ENCODE measurements at regions of chr17 and their contacts with region 1.

Region 1: DNA sequence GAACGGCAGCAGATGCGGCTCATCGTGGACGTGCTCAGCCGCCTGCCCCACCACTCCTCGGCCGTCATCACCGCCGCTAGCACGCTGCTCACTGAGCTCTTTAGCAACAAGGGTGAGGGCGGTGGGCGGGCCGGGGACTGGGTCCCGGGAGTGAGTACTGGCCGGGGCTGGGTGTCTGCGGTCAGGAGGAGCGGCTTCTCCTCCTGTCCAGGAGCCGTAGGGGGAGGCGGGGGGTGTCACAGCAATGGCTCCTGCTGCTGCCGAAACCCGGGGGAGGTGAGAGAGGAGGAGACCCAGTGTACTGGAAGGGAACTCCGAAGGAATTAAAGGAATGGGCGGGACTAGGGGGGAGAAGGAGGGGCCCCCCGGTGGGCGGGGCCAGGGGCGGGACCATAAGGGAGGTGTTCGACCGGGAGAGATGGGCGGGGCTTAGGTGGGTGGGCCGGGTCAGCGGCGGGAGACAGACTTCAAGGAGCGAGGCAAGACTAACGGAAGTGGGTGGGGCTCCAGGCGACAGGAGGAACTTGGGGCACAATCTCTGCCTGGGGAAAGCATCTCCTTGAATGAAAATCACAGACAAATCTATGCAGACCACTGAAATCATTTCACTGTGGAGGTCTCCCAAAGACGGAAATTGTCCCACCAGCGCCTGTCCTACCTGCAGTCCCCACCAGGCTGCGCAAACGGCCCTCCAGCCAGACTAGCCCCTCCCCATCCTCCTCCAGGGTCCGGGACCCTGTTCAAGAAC is 2.4 kb downstream of the NAGS start:
- DNase-seq: peak; percentile 96
- H3K4me3 Mint-ChIP-seq: peak overlapping the region; percentile 83
- H3K27ac Mint-ChIP-seq: peak overlapping the region; percentile 78
- H3K4me1 Mint-ChIP-seq: peaks cover 25% of the 10 kb centered on the region
- H3K27me3 Mint-ChIP-seq: peaks cover 16% of the 10 kb centered on the region

Region 2: GRCh38 chr17:44044067-44044466 is 37.3 kb after region 1 on chr17:
- intact Hi-C with region 1: loop called (anchors 5 kb)
- DNase-seq: no peak
- H3K4me3 Mint-ChIP-seq: no peak overlapping the region
- H3K27ac Mint-ChIP-seq: no peak overlapping the region
- H3K4me1 Mint-ChIP-seq: peaks cover 23% of the 10 kb centered on the region
- H3K27me3 Mint-ChIP-seq: no peaks in the 10 kb centered on the region